ENCODE measurements at regions of chr22 and their contacts with region 1.

Region 1: GRCh38 chr22:30903876-30904460 is 64.6 kb downstream of the MORC2 start:
- DNase-seq: peak; percentile 50
- H3K4me3 Mint-ChIP-seq: no peak overlapping the region
- H3K27ac Mint-ChIP-seq: no peak overlapping the region
- H3K4me1 Mint-ChIP-seq: peaks cover 8% of the 10 kb centered on the region
- H3K27me3 Mint-ChIP-seq: no peaks in the 10 kb centered on the region

Region 2: GRCh38 chr22:30863081-30863833 is 40.7 kb before region 1 on chr22:
- intact Hi-C with region 1: no loop called
- DNase-seq: no peak
- H3K4me3 Mint-ChIP-seq: no peak overlapping the region
- H3K27ac Mint-ChIP-seq: no peak overlapping the region
- H3K4me1 Mint-ChIP-seq: no peaks in the 10 kb centered on the region
- H3K27me3 Mint-ChIP-seq: no peaks in the 10 kb centered on the region

Region 3: GRCh38 chr22:30875481-30876201 is 28.3 kb before region 1 on chr22:
- intact Hi-C with region 1: loop called (anchors 1 kb)
- DNase-seq: no peak
- H3K4me3 Mint-ChIP-seq: no peak overlapping the region
- H3K27ac Mint-ChIP-seq: no peak overlapping the region
- H3K4me1 Mint-ChIP-seq: no peaks in the 10 kb centered on the region
- H3K27me3 Mint-ChIP-seq: no peaks in the 10 kb centered on the region

Region 4: GRCh38 chr22:31046539-31047226 is 142.7 kb after region 1 on chr22:
- intact Hi-C with region 1: no loop called
- DNase-seq: no peak
- H3K4me3 Mint-ChIP-seq: no peak overlapping the region
- H3K27ac Mint-ChIP-seq: no peak overlapping the region
- H3K4me1 Mint-ChIP-seq: no peaks in the 10 kb centered on the region
- H3K27me3 Mint-ChIP-seq: no peaks in the 10 kb centered on the region